GM10248 (cell line): ENCODE measurements at regions of chr6 and their contacts with region 1.

Region 1: DNA sequence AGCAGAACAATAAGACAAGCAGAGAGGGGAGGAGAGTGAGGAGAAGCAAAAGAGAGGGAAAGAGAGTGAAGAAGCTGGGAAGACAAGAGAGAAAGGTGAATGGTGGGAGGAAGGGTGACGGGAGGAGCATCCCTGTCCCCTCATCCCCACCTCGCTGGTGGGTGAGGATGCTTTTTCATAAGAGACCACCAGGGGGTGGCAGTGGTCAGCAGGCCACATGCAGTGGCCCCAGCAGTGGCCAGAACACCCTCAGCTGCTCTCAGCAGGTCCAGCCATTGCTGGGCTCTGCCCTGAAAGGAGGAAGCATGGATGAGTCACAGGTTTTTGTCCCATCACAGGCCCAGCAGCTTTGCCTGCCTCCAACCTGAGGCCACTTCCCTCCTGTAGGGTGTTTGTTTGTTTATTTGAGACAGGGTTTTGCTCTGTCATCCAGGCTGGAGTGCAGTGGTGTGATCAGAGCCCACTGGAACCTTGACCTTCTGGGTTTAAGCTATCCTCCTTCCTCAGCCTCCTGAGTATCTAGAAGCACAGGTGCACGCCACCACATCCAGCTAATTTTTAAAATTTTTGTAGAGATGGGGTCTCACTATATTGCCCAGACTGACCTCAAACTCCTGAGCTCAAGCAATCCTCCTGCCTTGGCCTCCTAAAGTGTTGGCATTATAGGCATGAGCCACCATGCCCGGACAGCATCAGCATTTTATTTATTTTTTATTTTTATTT is 24.0 kb downstream of the FGD2 start:
- DNase-seq: peak; percentile 73
- CTCF ChIP-seq: peak; percentile 79

Region 2: GRCh38 chr6:37005061-37005810 is 24.2 kb before region 1 on chr6 and contains the start of gene FGD2:
- CTCF ChIA-PET with region 1: interaction called, 21 read pairs
- POLR2A ChIA-PET with region 1: no interaction called
- DNase-seq: peak; percentile 92
- CTCF ChIP-seq: no peak

Region 3: DNA sequence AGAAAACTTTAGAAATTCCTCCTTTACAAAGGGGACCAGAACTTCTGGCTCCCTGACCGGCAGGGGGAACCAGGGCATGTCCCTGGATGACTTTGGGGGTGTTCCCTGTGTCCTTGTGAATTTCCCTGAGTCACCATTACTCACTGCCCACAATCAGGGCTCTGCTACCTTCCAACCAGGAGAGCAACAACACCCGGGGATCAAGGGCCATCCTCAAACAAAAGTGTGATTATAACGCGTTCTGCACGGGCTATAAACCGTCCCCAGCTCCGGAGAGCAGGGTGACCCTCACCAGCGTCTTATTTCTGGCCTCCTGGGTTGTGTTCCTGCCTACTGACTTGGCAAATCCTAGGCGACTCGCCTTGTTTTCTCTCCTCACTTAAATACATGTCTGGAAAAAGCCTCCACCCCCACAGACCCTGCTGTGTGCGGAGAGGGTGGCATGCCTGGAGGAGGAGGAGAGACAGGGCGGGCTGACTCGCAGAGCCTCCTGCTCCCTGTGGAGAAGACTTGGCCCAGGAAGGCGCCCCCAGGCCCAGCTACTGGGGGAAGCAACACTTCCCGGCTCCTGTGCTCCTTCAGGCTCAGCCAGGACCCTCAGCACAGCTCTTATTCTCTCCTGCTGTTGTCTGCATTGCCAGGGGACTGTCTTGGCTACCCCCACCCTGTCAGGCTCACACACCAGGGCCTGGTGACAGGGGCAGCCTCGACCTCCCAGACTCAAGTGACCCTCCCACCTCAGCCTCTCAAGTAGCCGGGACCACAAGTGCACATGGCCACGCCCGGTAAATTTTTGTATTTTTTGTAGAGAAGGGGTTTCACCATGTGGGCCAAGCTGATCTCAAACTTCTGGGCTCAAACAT is 30.2 kb after region 1 on chr6:
- CTCF ChIA-PET with region 1: interaction called, 13 read pairs
- POLR2A ChIA-PET with region 1: no interaction called
- DNase-seq: no peak
- CTCF ChIP-seq: no peak

Region 4: GRCh38 chr6:37110500-37111461 is 81.4 kb after region 1 on chr6:
- CTCF ChIA-PET with region 1: interaction called, 11 read pairs
- POLR2A ChIA-PET with region 1: no interaction called
- DNase-seq: peak; percentile 54
- CTCF ChIP-seq: no peak

Region 5: GRCh38 chr6:37121556-37121955 is 92.1 kb after region 1 on chr6:
- CTCF ChIA-PET with region 1: no interaction called
- POLR2A ChIA-PET with region 1: no interaction called
- DNase-seq: no peak
- CTCF ChIP-seq: no peak

Region 6: GRCh38 chr6:37160922-37161778 is 131.7 kb after region 1 on chr6:
- CTCF ChIA-PET with region 1: interaction called, 16 read pairs
- POLR2A ChIA-PET with region 1: no interaction called
- DNase-seq: peak; percentile 63
- CTCF ChIP-seq: no peak